ENCODE measurements at regions of chr6 and their contacts with region 1.

Region 1: DNA sequence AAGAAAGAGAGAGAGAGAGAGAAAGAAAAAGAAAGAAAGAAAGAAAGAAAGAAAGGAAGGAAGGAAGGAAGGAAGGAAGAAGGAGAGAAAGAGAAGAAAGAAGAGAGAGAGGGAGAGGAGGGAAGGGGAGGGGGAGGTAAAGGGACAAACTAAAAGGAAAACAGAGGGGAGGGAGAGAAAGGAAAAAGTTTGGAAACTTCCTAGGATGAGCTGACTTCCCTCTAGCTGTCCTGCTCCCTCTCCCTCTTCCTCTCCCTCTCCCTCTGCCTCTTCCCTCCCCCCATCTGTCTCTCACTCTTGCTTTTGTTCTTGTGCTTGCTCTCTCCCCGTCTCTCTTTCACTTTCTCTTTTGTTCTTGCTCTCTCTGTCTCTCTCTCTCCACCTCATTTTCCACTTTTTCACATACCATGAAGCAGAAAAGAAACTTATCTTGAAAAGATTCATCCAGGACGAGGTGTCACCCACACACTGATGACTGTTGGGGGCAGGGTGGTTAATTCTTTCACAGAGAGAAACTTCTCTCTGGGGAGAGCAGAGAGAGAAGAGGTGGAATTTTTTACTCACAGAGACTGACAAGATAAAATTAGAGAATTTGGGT is 56.4 kb upstream of the DUSP22 start:
- DNase-seq: peak in 1 of 2 donors; percentile 81
- ATAC-seq: peak; percentile 84 to 92 (median 91)
- H3K4me3 ChIP-seq: peak overlapping the region; percentile 4
- H3K4me3 Mint-ChIP-seq: peak overlapping the region; percentile 77
- H3K27ac ChIP-seq: peak overlapping the region; percentile 85
- H3K27ac Mint-ChIP-seq: peak overlapping the region; percentile 73 to 86
- H3K4me1 ChIP-seq: peaks cover 23% of the 10 kb centered on the region
- H3K4me1 Mint-ChIP-seq: peaks cover 23 to 24% of the 10 kb centered on the region in 2 donors
- H3K27me3 ChIP-seq: no peaks in the 10 kb centered on the region
- H3K27me3 Mint-ChIP-seq: no peaks in the 10 kb centered on the region
- CTCF ChIP-seq: no peak

Region 2: DNA sequence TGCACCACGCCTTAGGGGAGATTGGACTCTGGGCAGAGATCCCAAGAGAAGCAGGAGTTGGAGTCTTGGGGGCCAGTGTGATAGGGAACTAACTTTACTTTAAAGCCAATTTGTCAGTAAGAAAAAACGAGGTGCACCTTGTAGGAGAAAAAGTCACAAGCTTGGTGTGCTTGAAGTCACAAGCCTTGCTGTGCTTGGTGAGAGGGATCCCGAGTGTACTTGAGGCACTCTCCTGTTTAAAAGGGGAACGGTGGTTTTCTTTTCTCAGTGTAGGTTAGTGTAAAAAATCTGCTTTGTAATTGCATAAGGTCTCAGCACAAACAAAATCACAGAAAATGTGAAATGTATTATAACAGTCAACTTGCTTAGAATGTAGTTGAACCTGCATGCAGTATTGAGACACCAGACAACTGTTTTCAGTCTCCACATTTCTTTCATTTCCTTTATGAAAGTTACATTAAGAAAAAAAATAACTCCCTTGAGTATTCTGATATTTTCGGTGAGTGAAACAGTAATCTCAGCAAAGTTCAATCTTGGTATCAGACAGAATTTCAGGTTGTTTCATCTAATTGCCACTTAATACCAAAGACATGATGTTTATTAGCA is 54.7 kb before region 1 on chr6:
- intact Hi-C with region 1: no loop called
- DNase-seq: no peak
- ATAC-seq: no peak
- H3K4me3 ChIP-seq: no peak overlapping the region
- H3K4me3 Mint-ChIP-seq: no peak overlapping the region
- H3K27ac ChIP-seq: no peak overlapping the region
- H3K27ac Mint-ChIP-seq: no peak overlapping the region
- H3K4me1 ChIP-seq: peaks cover 8% of the 10 kb centered on the region
- H3K4me1 Mint-ChIP-seq: peaks cover 8 to 9% of the 10 kb centered on the region in 2 donors
- H3K27me3 ChIP-seq: no peaks in the 10 kb centered on the region
- H3K27me3 Mint-ChIP-seq: peaks cover 17 to 24% of the 10 kb centered on the region in 2 donors
- CTCF ChIP-seq: no peak

Region 3: DNA sequence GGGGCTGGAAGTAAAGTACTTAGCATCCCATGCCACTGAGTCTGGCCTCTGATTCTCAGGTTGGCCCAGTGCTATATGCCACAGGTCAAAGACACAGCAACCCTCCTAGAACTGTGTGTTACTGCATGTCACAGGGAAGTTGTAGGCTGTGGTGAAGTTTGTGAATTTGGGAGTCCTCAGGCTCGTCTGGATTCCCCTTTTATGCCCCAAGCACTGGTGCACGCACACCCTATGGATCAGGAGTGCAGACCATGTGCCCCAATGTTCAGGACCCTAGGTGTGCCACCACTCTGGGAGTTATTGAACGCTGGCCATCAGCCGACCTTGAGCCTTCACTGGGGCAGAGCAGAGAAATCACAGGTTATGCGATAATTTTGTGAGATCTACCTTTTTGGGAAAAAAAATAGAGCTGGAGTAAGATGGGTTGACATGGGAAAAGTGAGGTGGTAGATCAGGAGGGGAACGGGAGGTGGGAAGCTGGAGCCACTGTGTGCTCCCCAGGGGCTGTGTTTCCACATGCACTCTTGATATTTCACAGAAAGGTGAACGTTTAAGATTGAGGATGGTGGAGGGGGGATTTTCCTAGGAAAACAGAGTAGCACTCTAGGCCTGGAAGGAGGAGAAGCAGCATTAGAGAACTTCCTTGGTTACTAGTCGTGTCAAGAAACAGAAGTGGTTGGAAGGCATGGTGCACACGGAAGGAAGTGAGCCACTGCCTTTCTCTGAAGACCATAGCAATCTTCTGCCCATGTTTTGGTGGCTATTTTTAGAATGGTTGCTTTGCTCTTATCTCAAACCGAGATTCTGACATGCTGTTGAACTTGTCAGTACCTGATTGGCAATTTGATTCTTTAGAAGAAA is 100.5 kb after region 1 on chr6:
- intact Hi-C with region 1: loop called (anchors 5 kb)
- DNase-seq: peak in 1 of 2 donors; percentile 38
- ATAC-seq: peak; percentile 22 to 45 (median 43)
- H3K4me3 ChIP-seq: no peak overlapping the region
- H3K4me3 Mint-ChIP-seq: no peak overlapping the region
- H3K27ac ChIP-seq: peak overlapping the region; percentile 35
- H3K27ac Mint-ChIP-seq: peak overlapping the region; percentile 23 to 34
- H3K4me1 ChIP-seq: peaks cover 61% of the 10 kb centered on the region
- H3K4me1 Mint-ChIP-seq: peaks cover 51 to 56% of the 10 kb centered on the region in 2 donors
- H3K27me3 ChIP-seq: no peaks in the 10 kb centered on the region
- H3K27me3 Mint-ChIP-seq: no peaks in the 10 kb centered on the region
- CTCF ChIP-seq: no peak

Region 4: GRCh38 chr6:925656-926213 is 689.9 kb after region 1 on chr6:
- intact Hi-C with region 1: no loop called
- DNase-seq: no peak
- ATAC-seq: no peak
- H3K4me3 ChIP-seq: no peak overlapping the region
- H3K4me3 Mint-ChIP-seq: no peak overlapping the region
- H3K27ac ChIP-seq: no peak overlapping the region
- H3K27ac Mint-ChIP-seq: no peak overlapping the region
- H3K4me1 ChIP-seq: no peaks in the 10 kb centered on the region
- H3K4me1 Mint-ChIP-seq: no peaks in the 10 kb centered on the region
- H3K27me3 ChIP-seq: no peaks in the 10 kb centered on the region
- H3K27me3 Mint-ChIP-seq: peaks cover 8 to 29% of the 10 kb centered on the region in 2 donors
- CTCF ChIP-seq: no peak